ENCODE measurements at regions of chr14 and their contacts with region 1.

Region 1: GRCh38 chr14:103507751-103508150 is 14.9 kb downstream of the CKB start:
- DNase-seq: no peak
- H3K4me3 Mint-ChIP-seq: no peak overlapping the region
- H3K27ac Mint-ChIP-seq: no peak overlapping the region
- H3K4me1 Mint-ChIP-seq: peaks cover 6% of the 10 kb centered on the region
- H3K27me3 Mint-ChIP-seq: no peaks in the 10 kb centered on the region
- CTCF ChIP-seq: no peak

Region 2: GRCh38 chr14:103384450-103385151 is 123.2 kb before region 1 on chr14:
- CTCF ChIA-PET with region 1: no interaction called
- POLR2A ChIA-PET with region 1: no interaction called
- intact Hi-C with region 1: no loop called
- DNase-seq: no peak
- H3K4me3 Mint-ChIP-seq: peak overlapping the region; percentile 91
- H3K27ac Mint-ChIP-seq: peak overlapping the region; percentile 87
- H3K4me1 Mint-ChIP-seq: peaks cover 24% of the 10 kb centered on the region
- H3K27me3 Mint-ChIP-seq: no peaks in the 10 kb centered on the region
- CTCF ChIP-seq: no peak

Region 3: DNA sequence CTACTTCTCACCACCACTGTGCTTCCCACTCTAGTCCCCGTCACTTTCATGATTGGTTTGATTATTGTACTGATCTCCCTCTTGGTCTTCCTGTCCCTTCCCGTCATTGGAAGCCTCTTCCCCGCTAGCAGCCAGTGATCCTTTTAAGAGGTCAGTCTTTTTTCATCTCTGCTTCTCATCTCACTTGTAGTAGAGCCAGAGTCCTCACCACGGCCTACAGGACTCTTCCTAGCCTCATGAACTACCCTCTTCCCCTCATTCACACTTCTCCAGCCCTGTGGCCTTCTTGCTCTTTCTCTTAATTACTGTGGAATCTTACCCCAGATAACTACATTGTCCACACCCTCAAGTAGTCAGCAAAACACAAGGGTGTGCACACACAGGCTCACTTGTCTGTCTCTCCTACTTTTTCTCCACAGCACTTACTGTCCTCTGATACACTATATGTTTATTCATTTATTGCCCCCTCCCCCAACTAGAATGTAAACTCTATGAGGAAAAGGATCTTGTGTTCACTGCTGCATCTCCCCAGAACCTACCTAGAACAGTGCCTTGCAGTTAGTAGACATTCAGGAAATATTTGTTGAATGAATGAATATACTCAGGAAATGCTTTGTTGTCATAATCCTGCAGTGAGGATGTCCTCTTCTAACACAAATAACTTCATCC is 51.5 kb before region 1 on chr14:
- CTCF ChIA-PET with region 1: no interaction called
- POLR2A ChIA-PET with region 1: no interaction called
- intact Hi-C with region 1: no loop called
- DNase-seq: no peak
- H3K4me3 Mint-ChIP-seq: no peak overlapping the region
- H3K27ac Mint-ChIP-seq: no peak overlapping the region
- H3K4me1 Mint-ChIP-seq: peaks cover 9% of the 10 kb centered on the region
- H3K27me3 Mint-ChIP-seq: no peaks in the 10 kb centered on the region
- CTCF ChIP-seq: no peak

Region 4: DNA sequence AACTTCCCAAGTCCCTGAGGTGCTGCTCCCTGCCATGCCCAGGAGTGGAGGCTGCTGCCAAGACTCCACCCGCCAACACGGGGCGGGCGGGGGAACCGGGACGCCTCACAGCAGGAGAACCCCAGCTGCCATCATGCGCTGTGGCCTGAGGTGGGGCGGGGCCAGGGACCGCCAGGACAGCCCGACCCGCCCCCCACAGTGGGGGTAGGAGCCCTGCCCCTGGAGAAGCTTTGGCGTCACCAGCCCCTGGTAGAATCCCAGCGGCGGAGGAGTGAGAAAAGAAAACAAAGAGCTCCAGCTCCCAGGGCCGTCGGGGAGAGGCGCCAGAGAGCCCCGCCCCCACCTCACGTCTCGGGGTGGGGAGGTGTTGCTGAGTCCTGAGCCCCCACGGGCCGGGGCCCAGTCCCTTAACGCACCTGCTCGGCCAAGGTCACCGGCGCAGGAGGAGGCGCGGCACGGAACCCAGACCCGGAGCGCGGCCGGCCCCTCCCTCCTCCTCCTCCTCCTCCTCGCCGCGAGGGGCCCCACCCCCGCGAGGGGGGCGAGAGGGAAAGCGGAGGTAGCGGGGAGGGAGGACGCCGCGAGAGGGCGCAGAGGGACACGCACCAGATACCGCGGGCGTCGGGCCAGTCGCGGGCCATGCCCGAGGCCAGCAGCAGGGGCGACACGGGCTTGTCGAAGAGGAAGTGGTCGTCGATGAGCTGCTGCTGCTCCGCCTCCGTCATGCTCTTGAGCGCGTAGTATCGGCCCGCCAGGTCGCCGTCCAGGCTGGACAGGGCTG is 13.1 kb after region 1 on chr14:
- CTCF ChIA-PET with region 1: interaction called, 18 read pairs
- POLR2A ChIA-PET with region 1: interaction called, 4 read pairs
- intact Hi-C with region 1: no loop called
- DNase-seq: peak; percentile 80
- H3K4me3 Mint-ChIP-seq: peak overlapping the region; percentile 70
- H3K27ac Mint-ChIP-seq: peak overlapping the region; percentile 27
- H3K4me1 Mint-ChIP-seq: peaks cover 14% of the 10 kb centered on the region
- H3K27me3 Mint-ChIP-seq: no peaks in the 10 kb centered on the region
- CTCF ChIP-seq: peak; percentile 39

Measured in MCF 10A (cell line).